HEK293 (cell line): ENCODE measurements at regions of chr9 and their contacts with region 1.

Region 1: DNA sequence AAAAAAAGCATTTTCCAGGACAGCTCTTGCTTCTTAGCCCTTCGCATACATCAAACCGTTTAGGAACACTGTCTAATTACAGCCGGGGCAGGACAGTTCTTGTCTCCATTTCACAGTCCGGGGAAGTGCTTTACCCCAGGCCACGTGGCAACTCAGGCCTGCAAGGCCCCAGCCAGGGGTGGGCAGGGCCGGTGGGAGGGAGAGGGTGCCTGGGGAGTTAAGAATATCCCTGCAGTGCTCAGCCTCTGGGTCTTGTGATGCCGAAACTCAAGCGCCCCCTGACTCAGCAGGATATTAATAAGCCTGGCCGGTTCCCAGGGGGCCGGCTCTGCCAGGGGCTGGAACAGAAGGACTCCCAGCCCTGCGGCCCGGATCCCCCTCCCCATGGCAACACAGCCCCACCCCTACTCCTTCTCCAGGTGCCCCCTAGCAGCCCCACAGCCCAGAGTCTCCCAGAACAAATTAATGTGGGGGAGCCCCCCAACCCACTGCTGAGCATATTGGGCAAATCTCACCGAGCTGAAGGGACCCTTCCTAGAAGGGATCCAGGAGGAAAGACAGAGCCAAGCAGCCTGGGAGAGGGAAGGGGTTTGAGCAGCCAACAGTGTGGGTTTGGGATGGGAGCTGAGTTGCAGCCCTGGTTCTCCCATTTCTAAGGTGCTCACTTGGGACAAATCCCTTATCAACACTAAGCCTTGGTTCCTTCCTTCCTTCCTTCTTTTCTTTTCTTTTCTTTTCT is 45.3 kb downstream of the PLPP7 start:
- H3K4me3 ChIP-seq: no peak overlapping the region
- H3K27ac ChIP-seq: no peak overlapping the region
- H3K4me1 ChIP-seq: no peaks in the 10 kb centered on the region
- CTCF ChIP-seq: no peak

Region 2: DNA sequence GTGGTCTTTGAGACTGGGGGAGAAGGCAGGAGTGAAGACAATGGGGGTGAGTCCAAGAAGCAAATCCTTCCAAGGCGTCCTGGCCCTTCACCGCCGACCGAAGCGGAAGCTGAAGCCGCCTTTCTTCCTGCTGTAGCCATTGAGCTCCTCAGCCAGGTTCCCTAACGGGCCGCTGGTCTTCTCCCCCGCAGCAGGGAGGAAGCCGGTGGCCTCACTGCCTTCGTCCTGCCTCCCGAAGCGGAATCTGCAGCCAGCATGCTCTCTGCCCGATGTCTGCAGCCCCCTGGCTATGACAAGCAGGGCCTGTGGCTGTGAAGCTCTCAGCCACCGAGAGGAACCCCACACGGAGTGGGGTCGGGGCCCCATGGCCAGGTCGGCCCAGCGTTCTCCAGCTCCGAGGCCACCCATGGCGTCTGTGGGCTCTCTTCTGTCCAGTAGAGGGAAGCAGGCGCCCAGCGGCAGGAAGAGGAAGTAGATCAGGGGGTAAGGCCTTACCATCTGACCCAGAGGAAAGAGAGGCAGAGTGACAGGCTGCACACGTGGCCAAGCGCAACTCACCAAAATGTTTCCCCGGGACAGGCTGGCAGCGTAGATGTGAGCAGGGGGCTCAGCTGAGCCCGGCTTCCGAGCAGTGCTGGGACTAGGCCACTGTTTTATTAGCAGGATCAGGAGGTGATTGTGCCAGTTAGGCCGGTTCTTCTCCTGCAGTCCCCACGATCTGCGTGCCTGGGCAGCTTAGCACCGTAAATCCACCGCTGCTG is 441.3 kb before region 1 on chr9:
- CTCF ChIA-PET with region 1: no interaction called
- POLR2A ChIA-PET with region 1: no interaction called
- H3K4me3 ChIP-seq: no peak overlapping the region
- H3K27ac ChIP-seq: no peak overlapping the region
- H3K4me1 ChIP-seq: no peaks in the 10 kb centered on the region
- CTCF ChIP-seq: peak; percentile 53

Region 3: DNA sequence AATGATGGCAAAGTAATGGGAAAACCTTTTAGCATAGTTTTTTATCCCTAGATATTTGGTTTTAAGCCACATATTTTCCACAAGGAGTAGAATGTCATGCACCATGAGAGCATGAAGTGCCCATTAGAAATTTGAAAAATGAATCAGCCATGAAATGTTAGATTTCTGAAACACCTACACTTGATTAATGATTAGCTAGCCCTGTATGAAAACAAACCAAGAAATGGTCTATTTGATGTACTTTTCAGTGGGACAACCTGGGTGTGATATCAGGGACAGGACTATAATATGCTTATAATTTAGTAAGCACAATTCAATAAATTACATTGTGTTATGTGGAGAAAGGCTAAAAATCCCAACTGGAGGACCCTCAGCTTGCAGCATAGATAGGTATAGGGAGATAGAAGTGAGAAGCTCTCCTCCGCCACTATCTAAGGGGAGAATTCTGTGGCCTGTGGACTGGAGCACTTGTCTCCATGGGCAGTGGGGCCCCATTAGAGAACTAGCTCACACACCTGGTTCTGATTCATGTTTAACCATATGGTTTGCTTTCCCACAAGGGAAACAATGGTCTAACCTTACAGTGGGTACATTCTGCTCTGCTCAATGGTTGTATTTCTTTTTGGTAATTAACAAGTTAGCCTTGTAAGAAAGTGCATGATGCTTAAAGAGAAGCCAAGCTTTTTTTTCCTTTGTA is 174.2 kb before region 1 on chr9:
- CTCF ChIA-PET with region 1: interaction called, 11 read pairs
- POLR2A ChIA-PET with region 1: no interaction called
- H3K4me3 ChIP-seq: no peak overlapping the region
- H3K27ac ChIP-seq: no peak overlapping the region
- H3K4me1 ChIP-seq: no peaks in the 10 kb centered on the region
- CTCF ChIP-seq: no peak

Region 4: GRCh38 chr9:131206495-131206894 is 128.3 kb before region 1 on chr9:
- CTCF ChIA-PET with region 1: interaction called, 11 read pairs
- POLR2A ChIA-PET with region 1: no interaction called
- H3K4me3 ChIP-seq: no peak overlapping the region
- H3K27ac ChIP-seq: no peak overlapping the region
- H3K4me1 ChIP-seq: no peaks in the 10 kb centered on the region
- CTCF ChIP-seq: no peak

Region 5: DNA sequence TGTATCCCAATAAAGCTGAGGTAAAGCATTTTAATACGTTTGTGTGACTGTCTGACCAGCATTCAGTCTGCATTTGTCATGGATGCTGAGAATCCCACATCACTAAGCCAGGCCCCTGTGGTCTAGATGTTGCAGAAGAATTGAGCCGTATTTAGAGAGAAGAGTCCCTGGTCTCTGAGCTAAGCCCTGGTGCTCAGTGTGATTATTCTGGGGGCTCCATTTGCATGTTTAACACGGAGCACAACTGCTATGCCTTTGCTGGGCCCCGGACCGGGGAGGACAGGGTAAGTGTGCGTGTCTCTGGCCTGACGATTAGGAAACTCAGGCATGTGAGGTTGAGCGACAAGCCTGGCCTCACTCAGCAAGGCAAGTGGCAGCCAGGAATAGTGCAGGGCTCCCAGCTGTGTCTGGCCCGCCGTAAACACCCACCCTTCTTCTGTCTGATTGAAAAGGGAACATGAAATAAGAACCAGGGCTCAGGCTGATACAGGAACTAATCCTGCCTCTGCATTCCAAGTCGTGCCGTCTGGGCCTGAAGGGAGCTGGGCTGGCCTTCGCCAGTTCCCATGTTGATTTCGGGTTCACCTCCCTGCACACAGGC is 80.8 kb before region 1 on chr9:
- CTCF ChIA-PET with region 1: interaction called, 12 read pairs
- POLR2A ChIA-PET with region 1: no interaction called
- H3K4me3 ChIP-seq: no peak overlapping the region
- H3K27ac ChIP-seq: no peak overlapping the region
- H3K4me1 ChIP-seq: no peaks in the 10 kb centered on the region
- CTCF ChIP-seq: no peak

Region 6: DNA sequence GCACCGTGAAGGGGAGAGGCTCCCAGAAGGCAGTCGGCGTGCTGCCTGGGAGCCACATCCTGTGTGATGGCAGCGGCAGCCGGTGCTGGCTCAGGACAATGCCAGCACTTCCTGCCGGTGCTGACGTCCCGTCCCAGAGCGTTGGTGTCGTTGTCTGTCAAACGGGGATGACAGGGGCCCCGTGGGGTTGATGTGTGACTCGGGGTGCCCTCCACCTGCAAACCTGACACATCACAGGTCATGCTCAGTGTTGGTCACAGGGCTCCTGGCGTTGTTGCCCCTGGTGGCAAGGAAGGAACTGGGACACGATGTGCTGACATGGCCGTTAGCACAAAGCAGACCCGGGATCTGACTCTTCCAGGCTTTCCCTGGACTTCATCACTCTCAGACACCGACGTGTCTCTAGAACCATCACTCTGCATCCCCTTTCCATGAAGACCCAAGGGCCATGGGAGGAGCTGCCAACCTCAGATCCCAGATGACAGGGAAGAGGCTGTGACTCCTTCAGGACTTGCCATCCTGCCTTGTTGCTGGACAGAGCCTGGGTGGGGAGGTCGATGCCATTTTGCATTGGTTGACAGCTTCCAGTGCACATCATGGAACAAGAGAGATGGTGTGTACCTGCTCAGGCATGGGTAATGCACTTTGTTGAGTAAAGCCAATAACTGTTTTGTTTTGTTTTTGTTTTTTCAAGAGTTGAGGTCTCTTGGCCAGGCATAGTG is 23.8 kb before region 1 on chr9:
- CTCF ChIA-PET with region 1: interaction called, 23 read pairs
- POLR2A ChIA-PET with region 1: interaction called, 9 read pairs
- H3K4me3 ChIP-seq: no peak overlapping the region
- H3K27ac ChIP-seq: no peak overlapping the region
- H3K4me1 ChIP-seq: no peaks in the 10 kb centered on the region
- CTCF ChIP-seq: 0 out of 2 replicates have a peak, but pooled peaks have one; percentile 8